Naive thymus-derived CD4-positive, alpha-beta T cell (primary cell): ENCODE measurements at regions of chr10 and their contacts with region 1.

Region 1: GRCh38 chr10:71893920-71894319 is 42.9 kb upstream of the PSAP start:
- DNase-seq: no peak
- ATAC-seq: no peak
- H3K4me3 ChIP-seq: no peak overlapping the region
- H3K4me3 Mint-ChIP-seq: no peak overlapping the region
- H3K27ac ChIP-seq: no peak overlapping the region
- H3K27ac Mint-ChIP-seq: peak overlapping the region in 1 of 9 donors; percentile 78
- H3K4me1 ChIP-seq: peaks cover 0 to 11% of the 10 kb centered on the region in 2 donors
- H3K4me1 Mint-ChIP-seq: peaks cover 5 to 22% (median 11%) of the 10 kb centered on the region in 7 donors
- H3K27me3 ChIP-seq: no peaks in the 10 kb centered on the region
- H3K27me3 Mint-ChIP-seq: peaks cover 0 to 7% (median 0%) of the 10 kb centered on the region in 5 donors

Region 2: DNA sequence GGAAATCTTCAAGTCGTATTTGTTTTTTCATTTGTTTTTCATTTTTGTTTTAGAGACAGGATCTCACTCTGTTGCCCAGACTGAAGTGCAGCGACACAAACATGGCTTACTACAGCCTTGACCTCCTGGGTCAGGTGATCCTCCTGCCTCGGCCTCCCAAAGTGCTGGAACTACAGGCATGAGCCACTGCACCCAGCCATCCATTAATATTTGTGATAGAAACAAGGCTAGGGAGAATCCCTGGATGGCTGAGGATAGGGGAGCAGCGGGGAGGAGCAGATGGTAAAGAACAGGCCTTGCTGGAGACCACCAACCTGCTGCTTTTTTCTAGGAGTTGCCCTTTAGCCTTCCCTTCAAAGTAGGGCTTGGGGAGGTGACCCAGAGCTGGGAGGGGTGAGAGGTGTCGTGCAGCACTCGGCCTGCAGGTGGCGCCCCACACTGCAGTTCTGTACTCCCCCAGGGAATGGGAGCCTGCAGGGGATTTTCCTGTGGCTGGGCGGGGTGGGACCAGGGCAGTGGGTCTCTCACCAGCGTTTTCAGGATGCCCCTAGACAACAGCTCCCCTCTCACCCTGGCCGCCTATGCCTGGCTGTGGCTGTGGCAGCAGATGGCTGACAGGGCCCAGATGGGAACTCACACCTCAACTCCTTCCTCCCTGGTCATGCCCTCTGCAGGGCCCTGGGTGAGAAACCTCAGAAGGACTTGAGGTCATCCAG is 509.8 kb before region 1 on chr10:
- CTCF ChIA-PET with region 1: no interaction called
- POLR2A ChIA-PET with region 1: no interaction called
- intact Hi-C with region 1: loop called (anchors 1 to 5 kb)
- DNase-seq: peak; percentile 40 to 82 (median 61)
- ATAC-seq: peak; percentile 94
- H3K4me3 ChIP-seq: no peak overlapping the region
- H3K4me3 Mint-ChIP-seq: no peak overlapping the region
- H3K27ac ChIP-seq: no peak overlapping the region
- H3K27ac Mint-ChIP-seq: no peak overlapping the region
- H3K4me1 ChIP-seq: no peaks in the 10 kb centered on the region
- H3K4me1 Mint-ChIP-seq: no peaks in the 10 kb centered on the region
- H3K27me3 ChIP-seq: no peaks in the 10 kb centered on the region
- H3K27me3 Mint-ChIP-seq: peaks cover 0 to 24% (median 7%) of the 10 kb centered on the region in 5 donors

Region 3: GRCh38 chr10:71933651-71934050 is 39.7 kb after region 1 on chr10:
- CTCF ChIA-PET with region 1: interaction called, 6 read pairs
- POLR2A ChIA-PET with region 1: interaction called, 3 read pairs
- intact Hi-C with region 1: loop called in 1 of 2 experiments (anchors 1 kb)
- DNase-seq: peak in 8 of 9 donors; percentile 61 to 83 (median 75)
- ATAC-seq: peak; percentile 92
- H3K4me3 ChIP-seq: no peak overlapping the region
- H3K4me3 Mint-ChIP-seq: peak overlapping the region; percentile 57 to 85 (median 72)
- H3K27ac ChIP-seq: peak overlapping the region; percentile 62
- H3K27ac Mint-ChIP-seq: peak overlapping the region; percentile 71 to 92 (median 88)
- H3K4me1 ChIP-seq: peaks cover 0 to 38% of the 10 kb centered on the region in 2 donors
- H3K4me1 Mint-ChIP-seq: peaks cover 14 to 77% (median 53%) of the 10 kb centered on the region in 7 donors
- H3K27me3 ChIP-seq: no peaks in the 10 kb centered on the region
- H3K27me3 Mint-ChIP-seq: peaks cover 0 to 10% (median 0%) of the 10 kb centered on the region in 5 donors

Region 4: DNA sequence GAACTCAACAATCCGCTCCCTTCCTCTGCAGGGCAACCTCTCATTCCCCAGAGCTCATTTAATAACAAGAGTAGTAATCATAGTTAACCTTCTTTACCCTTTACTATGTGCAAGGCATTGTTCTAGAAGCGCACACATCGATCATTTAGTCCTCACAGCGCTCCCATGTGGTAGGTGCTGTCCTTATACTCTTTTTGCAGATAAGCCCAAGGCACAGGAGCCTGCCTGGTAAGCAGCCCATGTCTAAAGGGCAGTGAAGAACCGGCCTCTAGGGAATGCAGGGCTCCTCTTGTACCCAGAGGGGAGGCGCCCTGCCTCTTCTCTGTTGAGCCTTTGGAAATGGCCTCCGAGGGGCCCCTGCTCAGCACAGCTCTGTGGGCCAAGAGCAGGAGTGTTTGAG is 84.6 kb after region 1 on chr10:
- CTCF ChIA-PET with region 1: interaction called, 13 read pairs
- POLR2A ChIA-PET with region 1: no interaction called
- intact Hi-C with region 1: loop called in 1 of 2 experiments (anchors 1 kb)
- DNase-seq: no peak
- ATAC-seq: no peak
- H3K4me3 ChIP-seq: no peak overlapping the region
- H3K4me3 Mint-ChIP-seq: no peak overlapping the region
- H3K27ac ChIP-seq: no peak overlapping the region
- H3K27ac Mint-ChIP-seq: no peak overlapping the region
- H3K4me1 ChIP-seq: no peaks in the 10 kb centered on the region
- H3K4me1 Mint-ChIP-seq: peaks cover 0 to 12% (median 2%) of the 10 kb centered on the region in 7 donors
- H3K27me3 ChIP-seq: no peaks in the 10 kb centered on the region
- H3K27me3 Mint-ChIP-seq: no peaks in the 10 kb centered on the region

Region 5: DNA sequence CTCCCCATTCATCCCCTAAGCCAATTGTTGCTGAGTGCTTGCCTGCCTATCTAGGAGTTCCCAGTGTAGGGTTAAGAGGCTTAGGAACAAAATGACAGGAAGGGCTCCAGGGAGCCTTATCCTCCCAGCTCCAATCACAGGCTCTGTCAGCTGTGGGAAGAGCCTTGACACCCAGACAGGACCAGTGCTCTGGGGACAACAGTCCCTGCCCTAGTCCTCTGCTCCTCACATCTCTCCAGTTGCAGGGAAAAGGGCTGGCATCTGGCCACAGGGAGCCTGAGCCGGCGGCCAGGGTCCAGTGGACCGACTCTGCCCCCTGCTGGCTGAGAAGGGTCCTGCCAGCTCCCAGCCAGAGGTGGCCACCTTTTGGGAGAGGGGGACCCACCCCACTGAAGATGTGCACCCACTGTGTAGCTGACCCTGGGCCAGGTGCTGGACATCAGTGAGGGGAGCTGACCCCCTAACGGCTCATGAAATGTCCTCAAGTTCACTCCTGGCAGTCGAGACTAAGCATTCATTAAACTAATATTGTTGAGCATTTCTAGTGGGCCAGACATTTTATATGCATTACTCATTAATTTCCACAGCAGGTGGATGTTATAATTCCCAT is 443.2 kb after region 1 on chr10:
- CTCF ChIA-PET with region 1: interaction called, 16 read pairs
- POLR2A ChIA-PET with region 1: interaction called, 4 read pairs
- intact Hi-C with region 1: loop called (anchors 1 to 2 kb)
- DNase-seq: peak; percentile 34 to 77 (median 56)
- ATAC-seq: peak; percentile 25
- H3K4me3 ChIP-seq: no peak overlapping the region
- H3K4me3 Mint-ChIP-seq: peak overlapping the region in 4 of 10 donors; percentile 12 to 93 (median 30)
- H3K27ac ChIP-seq: peak overlapping the region; percentile 79
- H3K27ac Mint-ChIP-seq: peak overlapping the region; percentile 29 to 99 (median 92)
- H3K4me1 ChIP-seq: peaks cover 52 to 58% of the 10 kb centered on the region in 2 donors
- H3K4me1 Mint-ChIP-seq: peaks cover 31 to 66% (median 55%) of the 10 kb centered on the region in 7 donors
- H3K27me3 ChIP-seq: no peaks in the 10 kb centered on the region
- H3K27me3 Mint-ChIP-seq: no peaks in the 10 kb centered on the region